H1 (cell line): ENCODE measurements at regions of chr21 and their contacts with region 1.

Region 1: GRCh38 chr21:44761011-44761729 is 40.5 kb downstream of the UBE2G2 start:
- DNase-seq: no peak
- H3K4me3 ChIP-seq: no peak overlapping the region
- H3K27ac ChIP-seq: no peak overlapping the region
- H3K4me1 ChIP-seq: peaks cover 0 to 35% (median 15%) of the 10 kb centered on the region in 4 experiments; a peak in 6 of 7 replicates
- H3K27me3 ChIP-seq: no peaks in the 10 kb centered on the region
- CTCF ChIP-seq: peak in 2 of 3 experiments; percentile 67 to 90; a peak in 3 of 4 replicates
- EP300 ChIP-seq: no peak
- POLR2A ChIP-seq: no peak
- RAD21 ChIP-seq: peak; percentile 65 to 79

Region 2: GRCh38 chr21:44555256-44555875 is 205.8 kb before region 1 on chr21:
- CTCF ChIA-PET with region 1: no interaction called
- POLR2A ChIA-PET with region 1: no interaction called
- DNase-seq: peak in 1 of 2 experiments; percentile 39
- H3K4me3 ChIP-seq: no peak overlapping the region
- H3K27ac ChIP-seq: no peak overlapping the region
- H3K4me1 ChIP-seq: peaks cover 2 to 16% (median 10%) of the 10 kb centered on the region in 4 experiments
- H3K27me3 ChIP-seq: no peaks in the 10 kb centered on the region
- CTCF ChIP-seq: no peak
- EP300 ChIP-seq: no peak
- POLR2A ChIP-seq: no peak
- RAD21 ChIP-seq: no peak

Region 3: DNA sequence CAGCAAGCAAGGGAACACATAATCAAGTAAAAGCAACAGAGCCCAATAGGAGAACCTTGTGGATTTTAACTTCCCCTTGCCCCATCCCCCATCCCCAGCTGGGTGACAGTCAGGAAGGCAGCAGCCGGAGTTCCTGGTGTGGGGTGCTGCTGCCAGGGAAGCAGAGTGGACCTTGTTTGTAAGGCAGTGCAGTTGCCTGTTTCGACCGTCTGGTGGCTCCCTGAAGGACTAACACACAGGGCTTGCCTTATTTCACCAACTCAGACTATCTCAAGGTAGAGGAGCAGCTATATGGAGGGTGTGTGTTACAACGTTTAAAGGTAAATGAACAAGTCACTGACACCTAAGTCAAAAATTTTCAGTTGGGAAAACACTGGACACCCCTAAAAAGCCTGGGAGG is 142.7 kb before region 1 on chr21:
- CTCF ChIA-PET with region 1: interaction called, 16 read pairs
- POLR2A ChIA-PET with region 1: no interaction called
- DNase-seq: peak in 1 of 2 experiments; percentile 50
- H3K4me3 ChIP-seq: no peak overlapping the region
- H3K27ac ChIP-seq: no peak overlapping the region
- H3K4me1 ChIP-seq: peaks cover 0 to 6% (median 2%) of the 10 kb centered on the region in 4 experiments; a peak in 4 of 7 replicates
- H3K27me3 ChIP-seq: no peaks in the 10 kb centered on the region
- CTCF ChIP-seq: peak; percentile 58 to 69 (median 67)
- EP300 ChIP-seq: no peak
- POLR2A ChIP-seq: no peak
- RAD21 ChIP-seq: peak; percentile 52 to 62; a peak in 3 of 4 replicates

Region 4: GRCh38 chr21:44697811-44698734 is 63.1 kb before region 1 on chr21:
- CTCF ChIA-PET with region 1: interaction called, 12 read pairs
- POLR2A ChIA-PET with region 1: no interaction called
- DNase-seq: no peak
- H3K4me3 ChIP-seq: no peak overlapping the region
- H3K27ac ChIP-seq: peak overlapping the region; percentile 26; the same call in 1 of the 2 replicates
- H3K4me1 ChIP-seq: peaks cover 3 to 46% (median 29%) of the 10 kb centered on the region in 4 experiments
- H3K27me3 ChIP-seq: no peaks in the 10 kb centered on the region; a peak in 2 of 7 replicates
- CTCF ChIP-seq: no peak
- EP300 ChIP-seq: no peak
- POLR2A ChIP-seq: no peak
- RAD21 ChIP-seq: 0 out of 4 replicates have a peak, but pooled peaks of 1 of the 2 experiments have one; percentile 4

Region 5: GRCh38 chr21:44740742-44741141 is 20.4 kb before region 1 on chr21:
- CTCF ChIA-PET with region 1: interaction called, 10 read pairs
- POLR2A ChIA-PET with region 1: no interaction called
- DNase-seq: peak in 1 of 2 experiments; percentile 17
- H3K4me3 ChIP-seq: no peak overlapping the region
- H3K27ac ChIP-seq: no peak overlapping the region
- H3K4me1 ChIP-seq: no peaks in the 10 kb centered on the region
- H3K27me3 ChIP-seq: no peaks in the 10 kb centered on the region
- CTCF ChIP-seq: no peak
- EP300 ChIP-seq: no peak
- POLR2A ChIP-seq: no peak
- RAD21 ChIP-seq: no peak

Region 6: GRCh38 chr21:44905728-44906090 is 144.5 kb after region 1 on chr21:
- CTCF ChIA-PET with region 1: no interaction called
- POLR2A ChIA-PET with region 1: no interaction called
- DNase-seq: no peak
- H3K4me3 ChIP-seq: no peak overlapping the region
- H3K27ac ChIP-seq: no peak overlapping the region; the same call in 1 of the 2 replicates
- H3K4me1 ChIP-seq: peaks cover 0 to 11% (median 0%) of the 10 kb centered on the region in 4 experiments; a peak in 3 of 7 replicates
- H3K27me3 ChIP-seq: peaks cover 0 to 2% (median 1%) of the 10 kb centered on the region in 4 experiments; a peak in 1 of 7 replicates
- CTCF ChIP-seq: no peak
- EP300 ChIP-seq: no peak
- POLR2A ChIP-seq: no peak
- RAD21 ChIP-seq: no peak